Right lobe of liver (tissue), 6 donors: ENCODE measurements at regions of chr6 and their contacts with region 1.

Region 1: GRCh38 chr6:127539272-127539671 is 20.1 kb upstream of the MTCL3 start:
- DNase-seq: no peak
- ATAC-seq: peak in 1 of 4 donors; percentile 78
- H3K4me3 ChIP-seq: no peak overlapping the region
- H3K27ac ChIP-seq: no peak overlapping the region
- H3K4me1 ChIP-seq: no peaks in the 10 kb centered on the region
- H3K27me3 ChIP-seq: no peaks in the 10 kb centered on the region
- CTCF ChIP-seq: peak; percentile 35 to 58 (median 41)
- POLR2A ChIP-seq: no peak

Region 2: GRCh38 chr6:127464881-127465459 is 74.3 kb before region 1 on chr6:
- intact Hi-C with region 1: loop called in 1 of 2 experiments (anchors 5 kb)
- DNase-seq: peak; percentile 63 to 75 (median 75)
- ATAC-seq: peak; percentile 95 to 98 (median 97)
- H3K4me3 ChIP-seq: no peak overlapping the region
- H3K27ac ChIP-seq: no peak overlapping the region
- H3K4me1 ChIP-seq: no peaks in the 10 kb centered on the region
- H3K27me3 ChIP-seq: no peaks in the 10 kb centered on the region
- CTCF ChIP-seq: peak; percentile 80 to 91 (median 85)
- POLR2A ChIP-seq: no peak

Region 3: GRCh38 chr6:127855542-127856159 is 316.4 kb after region 1 on chr6:
- intact Hi-C with region 1: no loop called
- DNase-seq: no peak
- ATAC-seq: peak; percentile 62 to 67 (median 64)
- H3K4me3 ChIP-seq: no peak overlapping the region
- H3K27ac ChIP-seq: no peak overlapping the region
- H3K4me1 ChIP-seq: no peaks in the 10 kb centered on the region
- H3K27me3 ChIP-seq: no peaks in the 10 kb centered on the region
- CTCF ChIP-seq: peak; percentile 52 to 63 (median 61)
- POLR2A ChIP-seq: no peak